ENCODE measurements at regions of chr19 and their contacts with region 1.

Region 1: DNA sequence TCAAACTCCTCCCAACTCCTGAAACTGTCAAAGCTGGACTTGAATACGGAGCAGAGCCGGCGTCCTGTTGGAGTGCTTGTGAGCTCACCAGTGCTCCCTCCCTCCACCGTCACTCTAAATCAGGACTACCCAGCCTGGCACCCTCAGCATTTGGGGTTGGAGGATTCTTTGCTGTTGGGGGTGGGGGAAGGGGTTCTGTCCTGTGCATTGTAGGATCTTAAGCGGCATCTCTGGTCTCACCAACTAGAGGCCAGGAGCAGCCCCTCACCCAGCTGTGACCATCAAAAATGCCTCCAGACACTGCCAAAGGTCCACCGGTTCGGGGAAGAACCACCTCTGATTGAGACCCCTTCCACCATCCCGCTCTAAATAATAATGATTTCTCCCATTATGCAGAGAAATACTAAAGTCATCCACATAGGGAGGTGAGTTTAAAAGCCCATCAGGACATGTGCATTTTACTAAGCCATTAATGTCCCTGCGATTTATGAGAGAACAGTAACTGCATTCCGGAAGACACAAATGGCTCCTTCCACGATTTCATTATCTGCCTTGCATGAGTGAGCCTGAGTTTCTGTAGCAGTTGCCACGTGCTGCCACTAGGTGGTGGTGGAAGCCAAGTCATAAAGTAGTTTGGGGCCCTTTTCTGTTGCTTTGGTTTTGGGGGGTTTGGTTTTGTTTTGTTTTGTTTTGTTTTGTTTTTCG is 16.1 kb upstream of the USP29 start:
- DNase-seq: peak in 4 of 5 donors; percentile 43 to 58 (median 43)
- ATAC-seq: peak in 3 of 4 donors; percentile 59 to 79 (median 62)
- H3K4me3 ChIP-seq: peak overlapping the region in 7 of 12 donors; percentile 3 to 28 (median 22)
- H3K27ac ChIP-seq: no peak overlapping the region
- H3K4me1 ChIP-seq: peaks cover 0 to 12% (median 0%) of the 10 kb centered on the region in 12 donors
- H3K27me3 ChIP-seq: peaks cover 13 to 48% (median 19%) of the 10 kb centered on the region in 9 donors
- CTCF ChIP-seq: peak; percentile 62 to 92 (median 84)
- POLR2A ChIP-seq: no peak

Region 2: DNA sequence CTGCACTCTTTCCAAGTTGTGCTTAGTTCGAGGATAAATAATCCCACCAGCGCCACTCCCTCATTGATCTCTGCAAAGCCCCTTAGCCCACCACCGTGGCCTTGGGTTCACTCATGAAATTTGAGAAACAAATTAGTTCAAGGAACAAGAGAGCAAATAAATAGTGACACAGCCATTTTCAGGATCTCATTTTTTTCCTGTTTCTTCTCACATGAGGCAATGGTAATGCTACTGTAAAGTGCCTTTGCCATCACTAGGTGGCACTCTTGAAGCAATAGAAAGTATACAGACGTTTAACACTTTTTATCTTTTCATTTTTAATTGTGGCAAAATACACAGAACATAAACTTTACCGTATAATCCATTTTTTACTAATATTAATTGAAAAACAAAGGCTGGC is 355.3 kb before region 1 on chr19:
- intact Hi-C with region 1: loop called in 9 of 10 experiments (anchors 1 to 5 kb)
- DNase-seq: no peak
- ATAC-seq: no peak
- H3K4me3 ChIP-seq: peak overlapping the region in 1 of 12 donors; percentile 10
- H3K27ac ChIP-seq: no peak overlapping the region
- H3K4me1 ChIP-seq: peaks cover 0 to 3% (median 0%) of the 10 kb centered on the region in 12 donors
- H3K27me3 ChIP-seq: peaks cover 0 to 10% (median 0%) of the 10 kb centered on the region in 9 donors
- CTCF ChIP-seq: peak; percentile 33 to 73 (median 56)
- POLR2A ChIP-seq: no peak

Region 3: GRCh38 chr19:57118848-57119247 is 15.1 kb after region 1 on chr19:
- intact Hi-C with region 1: no loop called
- DNase-seq: no peak
- ATAC-seq: no peak
- H3K4me3 ChIP-seq: no peak overlapping the region
- H3K27ac ChIP-seq: no peak overlapping the region
- H3K4me1 ChIP-seq: no peaks in the 10 kb centered on the region
- H3K27me3 ChIP-seq: peaks cover 0 to 24% (median 0%) of the 10 kb centered on the region in 9 donors
- CTCF ChIP-seq: no peak
- POLR2A ChIP-seq: no peak

Region 4: GRCh38 chr19:57240311-57241090 is 136.8 kb after region 1 on chr19 and contains the start of gene ZNF805:
- intact Hi-C with region 1: loop called in 1 of 10 experiments (anchors 10 kb)
- DNase-seq: peak; percentile 97 to 98 (median 97)
- ATAC-seq: peak; percentile 99 to 100 (median 99)
- H3K4me3 ChIP-seq: peak within 1 kb of the TSS; percentile 79 to 98 (median 89)
- H3K27ac ChIP-seq: peak within 1 kb of the TSS; percentile 76 to 97 (median 90)
- H3K4me1 ChIP-seq: peaks cover 0 to 32% (median 17%) of the 10 kb centered on the region in 12 donors
- H3K27me3 ChIP-seq: no peaks in the 10 kb centered on the region
- CTCF ChIP-seq: peak in 7 of 12 donors; percentile 7 to 33 (median 16)
- POLR2A ChIP-seq: peak in 1 of 2 donors; percentile 73
- total RNA-seq, gene ZNF805: 7.0 to 15.3 (median 11.4) TPM

Region 5: GRCh38 chr19:57350877-57351805 is 247.4 kb after region 1 on chr19 and contains the start of gene ZNF304:
- intact Hi-C with region 1: loop called in 1 of 10 experiments (anchors 10 kb)
- DNase-seq: peak; percentile 95 to 97 (median 96)
- ATAC-seq: peak; percentile 97 to 99 (median 98)
- H3K4me3 ChIP-seq: peak within 1 kb of the TSS; percentile 75 to 100 (median 92)
- H3K27ac ChIP-seq: peak within 1 kb of the TSS; percentile 41 to 91 (median 86)
- H3K4me1 ChIP-seq: peaks cover 0 to 44% (median 21%) of the 10 kb centered on the region in 12 donors
- H3K27me3 ChIP-seq: no peaks in the 10 kb centered on the region
- CTCF ChIP-seq: no peak
- POLR2A ChIP-seq: peak in 1 of 2 donors; percentile 43
- total RNA-seq, gene ZNF304: 7.0 to 14.5 (median 9.7) TPM

Region 6: GRCh38 chr19:57410877-57411671 is 307.3 kb after region 1 on chr19 and contains the start of gene ZNF17:
- intact Hi-C with region 1: loop called in 1 of 10 experiments (anchors 10 kb)
- DNase-seq: peak; percentile 94 to 96 (median 95)
- ATAC-seq: peak; percentile 99 to 100 (median 100)
- H3K4me3 ChIP-seq: peak within 1 kb of the TSS; percentile 73 to 98 (median 88)
- H3K27ac ChIP-seq: peak within 1 kb of the TSS; percentile 55 to 84 (median 80)
- H3K4me1 ChIP-seq: peaks cover 0 to 37% (median 15%) of the 10 kb centered on the region in 12 donors
- H3K27me3 ChIP-seq: no peaks in the 10 kb centered on the region
- CTCF ChIP-seq: no peak
- POLR2A ChIP-seq: peak in 1 of 2 donors; percentile 71
- total RNA-seq, gene ZNF17: 3.9 to 13.5 (median 9.0) TPM

Region 7: GRCh38 chr19:57435062-57435978 is 331.6 kb after region 1 on chr19 and contains the start of gene ZNF749:
- intact Hi-C with region 1: loop called in 1 of 10 experiments (anchors 5 kb)
- DNase-seq: peak; percentile 97 to 99 (median 99)
- ATAC-seq: peak; percentile 99 to 100 (median 100)
- H3K4me3 ChIP-seq: peak within 1 kb of the TSS; percentile 43 to 94 (median 88)
- H3K27ac ChIP-seq: peak within 1 kb of the TSS in 8 of 12 donors; percentile 29 to 69 (median 50)
- H3K4me1 ChIP-seq: peaks cover 0 to 24% (median 15%) of the 10 kb centered on the region in 12 donors
- H3K27me3 ChIP-seq: no peaks in the 10 kb centered on the region
- CTCF ChIP-seq: no peak
- POLR2A ChIP-seq: peak in 1 of 2 donors; percentile 40
- total RNA-seq, gene ZNF749: 2.0 to 8.2 (median 3.7) TPM

Region 8: DNA sequence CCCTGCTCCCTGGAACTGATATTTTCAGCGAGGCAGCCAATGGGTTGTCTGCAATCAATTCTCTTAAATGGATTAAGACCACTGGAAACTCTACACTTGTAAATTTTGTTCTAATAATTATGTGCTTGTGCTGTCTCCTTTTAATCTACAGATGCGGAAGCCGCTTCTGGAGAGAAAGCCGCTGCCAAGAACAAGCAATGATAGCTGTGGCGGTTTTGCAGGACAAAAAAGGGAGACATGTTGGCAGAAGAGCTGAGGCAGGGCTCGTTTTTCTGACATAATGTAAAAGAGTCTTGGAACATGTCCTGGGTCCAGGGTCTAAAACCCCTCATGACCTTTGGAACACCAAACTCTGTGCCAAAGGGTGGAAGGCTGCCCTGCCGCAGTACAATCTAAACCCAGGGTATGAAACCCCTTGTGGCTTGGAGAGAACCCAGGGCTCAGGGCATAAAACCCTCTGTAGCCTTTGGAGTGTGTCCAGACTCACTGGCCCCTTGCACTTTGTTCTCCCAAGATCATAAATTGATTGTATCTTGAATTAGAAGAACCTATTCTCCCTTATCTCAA is 800.0 kb after region 1 on chr19:
- intact Hi-C with region 1: loop called in 1 of 10 experiments (anchors 10 kb)
- DNase-seq: no peak
- ATAC-seq: no peak
- H3K4me3 ChIP-seq: no peak overlapping the region
- H3K27ac ChIP-seq: no peak overlapping the region
- H3K4me1 ChIP-seq: peaks cover 0 to 8% (median 0%) of the 10 kb centered on the region in 12 donors
- H3K27me3 ChIP-seq: no peaks in the 10 kb centered on the region
- CTCF ChIP-seq: no peak
- POLR2A ChIP-seq: no peak

Measured in heart left ventricle (tissue), 16 donors.